ENCODE measurements at regions of chr2 and their contacts with region 1.

Region 1: GRCh38 chr2:25127646-25128045 is 40.7 kb downstream of the POMC start:
- DNase-seq: no peak
- ATAC-seq: no peak
- H3K4me3 ChIP-seq: no peak overlapping the region
- H3K4me3 Mint-ChIP-seq: no peak overlapping the region
- H3K27ac ChIP-seq: no peak overlapping the region
- H3K27ac Mint-ChIP-seq: no peak overlapping the region
- H3K4me1 ChIP-seq: peaks cover 0 to 18% of the 10 kb centered on the region in 2 experiments
- H3K4me1 Mint-ChIP-seq: peaks cover 12 to 15% (median 12%) of the 10 kb centered on the region in 3 donors
- H3K27me3 ChIP-seq: peaks cover 4 to 40% of the 10 kb centered on the region in 2 experiments
- H3K27me3 Mint-ChIP-seq: peaks cover 18 to 28% of the 10 kb centered on the region in 2 donors

Region 2: GRCh38 chr2:24409700-24410556 is 717.7 kb before region 1 on chr2:
- CTCF ChIA-PET with region 1: interaction called, 6 to 19 read pairs
- POLR2A ChIA-PET with region 1: no interaction called
- DNase-seq: peak in 22 of 35 experiments; percentile 6 to 79 (median 18)
- ATAC-seq: peak; percentile 50 to 60 (median 55)
- H3K4me3 ChIP-seq: no peak overlapping the region
- H3K4me3 Mint-ChIP-seq: no peak overlapping the region
- H3K27ac ChIP-seq: no peak overlapping the region
- H3K27ac Mint-ChIP-seq: no peak overlapping the region
- H3K4me1 ChIP-seq: no peaks in the 10 kb centered on the region
- H3K4me1 Mint-ChIP-seq: no peaks in the 10 kb centered on the region
- H3K27me3 ChIP-seq: peaks cover 0 to 4% of the 10 kb centered on the region in 2 experiments
- H3K27me3 Mint-ChIP-seq: peaks cover 9 to 12% of the 10 kb centered on the region in 2 donors

Region 3: GRCh38 chr2:24971536-24972314 is 155.9 kb before region 1 on chr2 and contains the start of gene DNAJC27:
- CTCF ChIA-PET with region 1: interaction called, 10 to 57 read pairs
- POLR2A ChIA-PET with region 1: interaction called, 3 to 5 read pairs
- DNase-seq: peak; percentile 91 to 99 (median 97)
- ATAC-seq: peak; percentile 86 to 93 (median 91)
- H3K4me3 ChIP-seq: peak within 1 kb of the TSS; percentile 90 to 93
- H3K4me3 Mint-ChIP-seq: peak within 1 kb of the TSS; percentile 92 to 98 (median 97)
- H3K27ac ChIP-seq: peak within 1 kb of the TSS; percentile 100
- H3K27ac Mint-ChIP-seq: peak within 1 kb of the TSS; percentile 100
- H3K4me1 ChIP-seq: peaks cover 15 to 17% of the 10 kb centered on the region in 2 experiments
- H3K4me1 Mint-ChIP-seq: peaks cover 22 to 31% (median 25%) of the 10 kb centered on the region in 3 donors
- H3K27me3 ChIP-seq: no peaks in the 10 kb centered on the region
- H3K27me3 Mint-ChIP-seq: no peaks in the 10 kb centered on the region
- total RNA-seq, gene DNAJC27: 10.0 to 15.2 (median 12.7) TPM

Region 4: DNA sequence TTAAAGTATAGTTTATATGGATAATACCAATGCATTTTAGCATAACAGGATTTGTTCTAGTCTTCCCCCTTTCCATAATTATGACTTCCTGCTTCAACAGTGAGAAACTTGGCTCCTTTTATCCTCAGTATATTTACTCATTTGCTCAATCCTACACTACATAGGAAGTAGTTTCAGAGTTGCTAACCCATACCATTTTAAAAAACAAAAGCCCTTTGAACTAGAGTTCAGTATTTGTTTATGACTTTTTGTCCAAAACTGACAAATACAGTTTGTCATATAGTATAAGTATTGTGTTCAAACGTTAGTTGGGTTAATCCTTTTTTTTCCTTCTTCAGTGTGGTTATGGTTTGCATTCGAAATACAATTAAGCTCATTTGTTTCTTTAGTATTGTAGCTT is 150.0 kb before region 1 on chr2:
- CTCF ChIA-PET with region 1: interaction called, 10 to 57 read pairs
- POLR2A ChIA-PET with region 1: interaction called, 3 to 5 read pairs
- DNase-seq: no peak
- ATAC-seq: no peak
- H3K4me3 ChIP-seq: no peak overlapping the region
- H3K4me3 Mint-ChIP-seq: no peak overlapping the region
- H3K27ac ChIP-seq: no peak overlapping the region
- H3K27ac Mint-ChIP-seq: no peak overlapping the region
- H3K4me1 ChIP-seq: peaks cover under 1 to 12% of the 10 kb centered on the region in 2 experiments
- H3K4me1 Mint-ChIP-seq: peaks cover 12 to 15% (median 14%) of the 10 kb centered on the region in 3 donors
- H3K27me3 ChIP-seq: no peaks in the 10 kb centered on the region
- H3K27me3 Mint-ChIP-seq: no peaks in the 10 kb centered on the region

Region 5: GRCh38 chr2:25161055-25161781 is 33.6 kb after region 1 on chr2:
- CTCF ChIA-PET with region 1: no interaction called
- POLR2A ChIA-PET with region 1: no interaction called
- DNase-seq: peak; percentile 28 to 79 (median 56)
- ATAC-seq: peak; percentile 51 to 76 (median 72)
- H3K4me3 ChIP-seq: peak overlapping the region; percentile 29 to 47
- H3K4me3 Mint-ChIP-seq: peak overlapping the region; percentile 43 to 75 (median 67)
- H3K27ac ChIP-seq: peak overlapping the region; percentile 61
- H3K27ac Mint-ChIP-seq: peak overlapping the region; percentile 59 to 83
- H3K4me1 ChIP-seq: peaks cover 0 to 24% of the 10 kb centered on the region in 2 experiments
- H3K4me1 Mint-ChIP-seq: peaks cover 22 to 28% (median 25%) of the 10 kb centered on the region in 3 donors
- H3K27me3 ChIP-seq: peaks cover 3 to 9% of the 10 kb centered on the region in 2 experiments
- H3K27me3 Mint-ChIP-seq: peaks cover 0 to 2% of the 10 kb centered on the region in 2 donors

Region 6: DNA sequence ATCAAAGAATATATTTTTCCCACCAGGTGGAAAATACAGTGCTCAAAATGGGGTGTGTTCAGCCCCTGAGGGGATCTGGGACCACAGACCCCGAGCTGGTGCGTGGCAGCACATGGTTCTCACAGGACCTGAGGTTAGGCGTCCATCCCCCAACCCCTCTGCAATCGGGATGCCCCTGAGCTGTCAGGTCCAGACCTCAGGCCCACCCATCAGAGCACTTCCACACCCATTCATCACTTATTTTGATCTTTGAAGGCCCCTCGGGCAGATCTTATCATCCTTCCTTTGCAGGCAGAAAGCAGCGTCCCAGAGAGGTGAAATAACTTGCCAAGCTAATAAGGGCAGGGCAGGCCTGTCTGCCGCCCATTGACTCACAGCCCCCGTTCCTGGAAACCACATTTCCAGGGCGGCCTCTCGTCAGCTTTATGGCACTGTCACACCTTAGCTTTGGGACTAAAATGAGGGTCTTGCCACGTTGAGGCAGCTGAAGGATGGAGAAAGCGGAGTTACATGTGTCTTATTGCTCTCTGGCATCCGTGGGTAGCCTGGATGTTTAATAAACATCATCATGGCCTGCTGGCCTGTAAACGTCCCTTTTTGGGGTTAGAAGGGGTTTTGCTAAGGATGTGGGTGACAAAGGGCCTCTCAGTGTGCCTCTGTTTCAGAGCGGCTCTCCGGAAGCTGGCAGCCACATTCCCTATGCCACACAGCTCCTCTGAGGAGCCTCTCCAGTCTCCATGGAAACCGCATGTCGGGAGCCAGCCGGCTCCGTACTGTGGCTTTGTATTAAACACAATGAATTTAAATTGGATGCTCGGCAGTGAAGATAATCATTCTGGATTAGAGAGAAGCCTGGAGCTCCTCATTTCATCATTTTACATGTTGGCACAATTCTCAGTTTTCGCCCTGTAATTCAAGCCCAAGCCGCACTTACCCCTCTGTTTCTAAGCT is 1784.5 kb after region 1 on chr2:
- CTCF ChIA-PET with region 1: no interaction called
- POLR2A ChIA-PET with region 1: no interaction called
- DNase-seq: no peak
- ATAC-seq: no peak
- H3K4me3 ChIP-seq: no peak overlapping the region
- H3K4me3 Mint-ChIP-seq: no peak overlapping the region
- H3K27ac ChIP-seq: no peak overlapping the region
- H3K27ac Mint-ChIP-seq: no peak overlapping the region
- H3K4me1 ChIP-seq: no peaks in the 10 kb centered on the region
- H3K4me1 Mint-ChIP-seq: no peaks in the 10 kb centered on the region
- H3K27me3 ChIP-seq: peaks cover 0 to 39% of the 10 kb centered on the region in 2 experiments
- H3K27me3 Mint-ChIP-seq: peaks cover 10 to 26% of the 10 kb centered on the region in 2 donors